ENCODE measurements at regions of chr4 and their contacts with region 1.

Region 1: GRCh38 chr4:10116580-10117358 is at the start of gene WDR1:
- DNase-seq: peak; percentile 91
- H3K4me3 Mint-ChIP-seq: peak within 1 kb of the TSS; percentile 97
- H3K27ac Mint-ChIP-seq: peak within 1 kb of the TSS; percentile 95
- H3K4me1 Mint-ChIP-seq: peaks cover 86% of the 10 kb centered on the region
- H3K27me3 Mint-ChIP-seq: no peaks in the 10 kb centered on the region
- total RNA-seq, gene WDR1: 449 and 453 TPM in 2 replicates

Region 2: DNA sequence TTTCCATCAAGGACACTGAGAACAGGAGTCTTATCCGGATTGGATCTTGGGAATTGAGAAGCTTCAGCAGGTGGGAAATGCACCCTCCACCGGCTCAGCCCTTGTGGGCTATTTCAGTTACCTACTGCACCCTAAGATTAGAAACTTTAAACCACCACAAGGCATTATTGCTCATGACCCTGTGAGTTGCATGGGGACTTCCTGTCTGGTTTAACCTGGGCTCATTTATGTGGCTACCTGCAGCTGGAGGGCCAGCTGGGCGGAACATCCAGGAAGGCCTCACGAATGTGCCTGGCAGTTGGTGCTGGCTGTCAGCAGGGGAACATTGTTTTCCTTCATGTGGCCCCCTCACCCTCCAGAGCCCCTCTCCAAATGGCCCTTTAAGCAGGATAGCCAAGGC is 508.5 kb before region 1 on chr4:
- intact Hi-C with region 1: loop called (anchors 10 kb)
- DNase-seq: no peak
- H3K4me3 Mint-ChIP-seq: no peak overlapping the region
- H3K27ac Mint-ChIP-seq: no peak overlapping the region
- H3K4me1 Mint-ChIP-seq: peaks cover 35% of the 10 kb centered on the region
- H3K27me3 Mint-ChIP-seq: peaks cover 2% of the 10 kb centered on the region

Region 3: DNA sequence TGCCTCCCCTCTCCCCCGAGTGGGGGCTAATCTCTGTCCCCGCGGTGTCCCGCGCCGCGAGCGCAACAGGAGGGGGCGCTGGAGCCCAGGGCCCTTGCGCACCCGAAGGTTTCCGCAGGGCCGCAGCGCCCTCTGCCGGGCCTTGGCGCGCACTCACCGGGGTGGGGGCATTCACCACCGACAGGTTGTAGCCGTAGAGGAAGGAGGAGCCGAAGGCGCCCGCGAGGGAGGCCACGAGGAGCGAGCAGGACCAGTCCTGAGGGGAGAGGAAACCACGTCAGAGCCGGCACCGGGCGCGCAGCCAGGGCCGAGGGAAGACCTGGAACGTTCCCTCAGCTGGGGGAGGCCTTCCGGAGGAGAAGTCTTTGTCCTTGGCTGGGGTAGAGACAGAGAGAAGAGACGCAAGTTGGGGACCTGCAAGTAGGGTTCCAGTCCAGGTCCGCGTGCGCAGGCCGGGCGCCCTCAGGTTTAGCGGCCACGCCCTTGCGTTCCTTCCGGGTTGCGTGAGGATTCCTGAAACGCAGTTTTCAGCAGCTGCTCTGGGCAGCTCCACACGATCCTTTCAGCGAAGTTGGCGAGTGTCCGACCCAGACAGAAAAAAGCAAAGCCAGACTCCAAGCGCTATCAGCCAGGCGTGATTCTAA is 97.8 kb before region 1 on chr4:
- intact Hi-C with region 1: loop called (anchors 1 kb)
- DNase-seq: peak; percentile 94
- H3K4me3 Mint-ChIP-seq: peak overlapping the region; percentile 87
- H3K27ac Mint-ChIP-seq: peak overlapping the region; percentile 95
- H3K4me1 Mint-ChIP-seq: peaks cover 17% of the 10 kb centered on the region
- H3K27me3 Mint-ChIP-seq: peaks cover 5% of the 10 kb centered on the region

Region 4: DNA sequence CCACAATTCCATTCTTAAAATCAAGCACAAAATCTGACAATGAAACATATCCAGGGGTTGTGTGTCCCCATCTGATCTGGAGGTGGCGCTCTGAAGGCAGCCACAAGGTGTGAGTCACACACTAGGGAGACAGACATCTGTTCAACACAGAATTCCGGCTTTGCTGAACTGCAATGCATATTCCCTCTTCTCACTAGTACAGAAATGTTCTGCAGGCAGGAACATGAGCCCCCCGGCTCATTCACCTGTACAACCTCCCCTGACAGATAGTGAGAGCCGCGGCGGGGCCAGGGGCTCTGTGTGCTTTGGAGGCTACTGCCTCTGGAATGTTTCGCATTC is 42.0 kb before region 1 on chr4:
- intact Hi-C with region 1: no loop called
- DNase-seq: no peak
- H3K4me3 Mint-ChIP-seq: no peak overlapping the region
- H3K27ac Mint-ChIP-seq: no peak overlapping the region
- H3K4me1 Mint-ChIP-seq: no peaks in the 10 kb centered on the region
- H3K27me3 Mint-ChIP-seq: no peaks in the 10 kb centered on the region

Region 5: DNA sequence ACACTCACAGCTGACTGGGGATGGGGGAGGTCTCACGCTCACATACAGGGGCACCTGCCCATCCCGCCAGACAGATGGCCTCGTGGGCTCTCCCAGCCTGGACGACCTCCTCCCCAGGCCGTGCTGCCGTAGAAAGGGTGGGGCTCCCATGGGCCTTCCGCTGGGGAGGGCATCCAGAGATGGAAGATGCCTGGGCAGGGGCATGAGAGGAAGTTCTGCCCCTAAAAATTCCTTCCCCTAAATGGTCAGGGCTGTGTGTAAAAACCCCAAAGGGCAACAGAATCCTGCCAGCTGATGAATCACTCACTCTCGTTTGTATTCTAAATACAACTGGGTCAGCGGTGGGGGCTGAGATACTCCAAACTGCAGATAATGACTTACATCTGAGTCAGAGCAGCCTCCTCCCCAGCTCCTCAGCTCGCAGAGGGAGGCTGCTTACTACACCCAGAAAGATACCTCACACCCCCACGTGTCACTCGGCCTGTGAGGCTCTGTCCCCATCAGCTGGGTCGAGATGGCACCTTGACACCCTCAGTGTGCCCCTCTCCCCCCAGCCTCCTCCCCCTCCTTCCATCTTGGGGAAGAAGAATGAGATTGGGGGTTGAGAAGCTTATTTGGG is 10.2 kb before region 1 on chr4:
- intact Hi-C with region 1: loop called (anchors 1 kb)
- DNase-seq: peak; percentile 45
- H3K4me3 Mint-ChIP-seq: peak overlapping the region; percentile 61
- H3K27ac Mint-ChIP-seq: peak overlapping the region; percentile 81
- H3K4me1 Mint-ChIP-seq: peaks cover 99% of the 10 kb centered on the region
- H3K27me3 Mint-ChIP-seq: no peaks in the 10 kb centered on the region

Region 6: DNA sequence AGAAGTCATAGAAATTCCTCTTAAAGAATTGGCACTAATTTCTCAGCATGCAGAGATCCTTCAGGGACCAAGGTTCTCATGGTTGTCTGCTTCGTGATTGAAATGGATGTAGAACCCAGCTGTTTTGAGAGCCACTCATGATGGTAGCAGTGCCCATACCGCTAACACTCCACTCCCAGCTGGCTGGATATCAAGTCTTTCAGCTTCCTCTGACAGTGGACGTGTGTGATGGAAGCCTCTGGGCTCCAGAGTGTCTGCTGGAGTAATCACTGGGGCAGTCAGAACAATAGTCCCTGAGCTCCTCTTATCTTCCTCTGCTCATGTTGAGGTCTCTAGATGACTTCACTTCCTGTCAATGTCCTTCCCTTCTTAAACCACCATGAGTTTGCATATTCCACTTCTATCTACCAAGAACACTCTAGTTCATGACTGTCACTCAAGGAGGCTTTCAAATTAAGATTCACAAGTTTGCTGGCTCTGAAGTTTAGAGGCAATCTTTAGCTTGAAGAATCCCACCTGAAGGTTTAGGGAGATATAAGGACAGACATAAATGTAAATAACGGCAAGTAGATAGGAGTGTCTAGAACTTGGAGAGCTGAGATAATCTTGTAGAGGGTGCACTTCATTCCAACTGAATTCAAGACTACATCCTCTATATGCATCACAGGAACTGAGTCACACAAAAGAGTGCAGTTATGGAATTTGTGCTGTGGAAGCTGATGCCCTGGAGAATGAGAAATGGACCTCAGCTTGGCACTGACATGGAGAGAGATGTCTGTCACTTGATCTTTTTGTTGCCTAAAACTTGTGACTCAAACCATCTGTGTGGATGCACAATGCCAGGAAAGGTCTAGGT is 64.4 kb after region 1 on chr4:
- intact Hi-C with region 1: loop called (anchors 1 kb)
- DNase-seq: peak; percentile 21
- H3K4me3 Mint-ChIP-seq: peak overlapping the region; percentile 63
- H3K27ac Mint-ChIP-seq: peak overlapping the region; percentile 88
- H3K4me1 Mint-ChIP-seq: peaks cover 43% of the 10 kb centered on the region
- H3K27me3 Mint-ChIP-seq: peaks cover 7% of the 10 kb centered on the region